A549 (cell line): ENCODE measurements at regions of chr2 and their contacts with region 1.

Region 1: GRCh38 chr2:160970052-160970965 is 189.9 kb upstream of the TANK start:
- DNase-seq: peak; percentile 55 to 85
- ATAC-seq: peak; percentile 93 to 94
- H3K4me3 ChIP-seq: peak overlapping the region; percentile 29; the same call in 2 of the 3 replicates
- H3K27ac ChIP-seq: peak overlapping the region; percentile 91
- H3K4me1 ChIP-seq: peaks cover 9% of the 10 kb centered on the region; the same call in 1 of the 3 replicates
- CTCF ChIP-seq: peak; percentile 91
- EP300 ChIP-seq: no peak
- POLR2A ChIP-seq: no peak
- RAD21 ChIP-seq: peak; percentile 94 to 98

Region 2: DNA sequence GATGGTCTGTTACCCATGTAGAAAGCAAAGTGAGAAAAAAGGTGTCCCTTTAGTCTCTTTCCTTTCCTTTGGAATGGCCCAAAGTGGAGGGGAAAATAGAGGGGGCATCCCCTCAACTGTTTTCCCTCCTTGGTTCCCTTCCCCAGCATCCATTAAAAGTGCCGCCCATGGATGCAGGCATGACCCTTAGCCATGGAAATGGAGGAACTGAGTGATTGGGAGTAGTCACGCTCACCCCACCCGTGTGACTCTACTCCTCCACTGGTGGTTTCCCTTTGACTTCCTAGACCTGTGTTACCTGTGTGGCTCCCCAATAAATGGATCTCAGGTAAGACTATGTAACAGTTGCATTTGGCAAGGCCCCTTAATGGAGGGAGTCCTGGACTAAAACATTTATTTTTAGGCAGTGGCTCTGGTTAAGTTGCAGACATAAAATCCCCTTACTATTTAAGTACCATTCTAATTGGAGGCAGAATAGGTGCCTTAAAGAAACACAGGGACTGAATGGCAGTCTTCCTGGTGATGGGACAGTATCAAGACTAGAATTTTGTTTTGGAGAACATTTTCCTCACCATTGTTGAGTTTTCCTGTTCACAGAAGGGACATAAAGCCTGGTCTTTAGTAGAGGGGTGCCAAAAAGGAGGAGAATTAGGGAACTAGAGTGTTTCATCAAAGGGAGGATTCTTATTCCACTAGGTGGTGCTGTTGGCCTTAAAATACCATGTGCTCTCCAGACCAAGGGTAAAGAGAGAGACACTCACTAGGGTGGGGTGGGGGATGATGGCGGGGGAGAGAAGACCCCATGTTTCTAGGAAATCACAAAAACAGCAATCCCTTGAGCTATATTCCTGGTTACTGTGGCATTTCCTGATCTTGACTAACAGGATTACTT is 882.2 kb before region 1 on chr2:
- CTCF ChIA-PET with region 1: interaction called, 12 read pairs
- POLR2A ChIA-PET with region 1: no interaction called
- DNase-seq: peak; percentile 35 to 62
- ATAC-seq: peak; percentile 92 to 93
- H3K4me3 ChIP-seq: no peak overlapping the region
- H3K27ac ChIP-seq: peak overlapping the region; percentile 0 to 67; a peak in 3 of 6 replicates
- H3K4me1 ChIP-seq: peaks cover 10% of the 10 kb centered on the region
- CTCF ChIP-seq: peak; percentile 86
- EP300 ChIP-seq: no peak
- POLR2A ChIP-seq: no peak
- RAD21 ChIP-seq: peak; percentile 90 to 92

Region 3: GRCh38 chr2:160324161-160324800 is 646.0 kb before region 1 on chr2:
- CTCF ChIA-PET with region 1: interaction called, 33 read pairs
- POLR2A ChIA-PET with region 1: interaction called, 5 read pairs
- DNase-seq: peak; percentile 15 to 64
- ATAC-seq: peak in 1 of 2 experiments; percentile 71; a peak in 3 of 6 replicates
- H3K4me3 ChIP-seq: no peak overlapping the region
- H3K27ac ChIP-seq: peak overlapping the region in 1 of 2 experiments; percentile 29; a peak in 1 of 6 replicates
- H3K4me1 ChIP-seq: peaks cover 92% of the 10 kb centered on the region
- CTCF ChIP-seq: peak; percentile 79
- EP300 ChIP-seq: no peak
- POLR2A ChIP-seq: no peak
- RAD21 ChIP-seq: peak; percentile 71 to 76

Region 4: DNA sequence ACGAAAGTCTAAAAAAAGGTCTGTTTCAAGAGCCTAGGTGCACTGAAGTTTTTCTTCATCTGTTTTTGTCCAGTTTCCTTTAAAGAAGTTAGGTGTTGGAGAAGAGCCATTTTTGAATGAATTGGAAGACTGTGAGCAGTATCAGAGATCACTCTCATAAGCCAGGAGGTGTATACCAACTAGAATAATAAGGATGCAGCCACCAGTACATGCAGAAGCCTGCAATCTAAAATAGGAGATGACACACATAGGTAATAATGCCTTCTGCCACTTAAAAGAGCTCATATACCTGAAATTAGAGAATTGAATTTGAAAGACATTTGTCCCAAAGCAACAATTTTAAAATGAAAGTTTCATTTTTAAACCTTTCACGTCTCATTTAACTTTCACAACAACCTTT is 558.4 kb before region 1 on chr2:
- CTCF ChIA-PET with region 1: interaction called, 11 read pairs
- POLR2A ChIA-PET with region 1: interaction called, 4 read pairs
- DNase-seq: no peak
- ATAC-seq: no peak
- H3K4me3 ChIP-seq: no peak overlapping the region
- H3K27ac ChIP-seq: peak overlapping the region in 1 of 2 experiments; percentile 66; a peak in 3 of 6 replicates
- H3K4me1 ChIP-seq: peaks cover 43% of the 10 kb centered on the region
- CTCF ChIP-seq: no peak
- EP300 ChIP-seq: no peak
- POLR2A ChIP-seq: no peak
- RAD21 ChIP-seq: no peak

Region 5: GRCh38 chr2:160429248-160430000 is 540.9 kb before region 1 on chr2:
- CTCF ChIA-PET with region 1: interaction called, 15 read pairs
- POLR2A ChIA-PET with region 1: no interaction called
- DNase-seq: peak in 1 of 2 experiments; percentile 69
- ATAC-seq: peak; percentile 62 to 67; a peak in 3 of 6 replicates
- H3K4me3 ChIP-seq: no peak overlapping the region
- H3K27ac ChIP-seq: 0 out of 6 replicates have a peak overlapping the region, but pooled peaks of 1 of the 2 experiments have one; percentile 19
- H3K4me1 ChIP-seq: peaks cover 41% of the 10 kb centered on the region
- CTCF ChIP-seq: peak; percentile 48
- EP300 ChIP-seq: no peak
- POLR2A ChIP-seq: no peak
- RAD21 ChIP-seq: peak; percentile 45 to 49; a peak in 4 of 5 replicates

Region 6: GRCh38 chr2:160924936-160925353 is 45.4 kb before region 1 on chr2:
- CTCF ChIA-PET with region 1: interaction called, 11 read pairs
- POLR2A ChIA-PET with region 1: no interaction called
- DNase-seq: no peak
- ATAC-seq: no peak
- H3K4me3 ChIP-seq: no peak overlapping the region
- H3K27ac ChIP-seq: no peak overlapping the region
- H3K4me1 ChIP-seq: peaks cover 4% of the 10 kb centered on the region; the same call in 1 of the 3 replicates
- CTCF ChIP-seq: no peak
- EP300 ChIP-seq: no peak
- POLR2A ChIP-seq: no peak
- RAD21 ChIP-seq: no peak

Region 7: DNA sequence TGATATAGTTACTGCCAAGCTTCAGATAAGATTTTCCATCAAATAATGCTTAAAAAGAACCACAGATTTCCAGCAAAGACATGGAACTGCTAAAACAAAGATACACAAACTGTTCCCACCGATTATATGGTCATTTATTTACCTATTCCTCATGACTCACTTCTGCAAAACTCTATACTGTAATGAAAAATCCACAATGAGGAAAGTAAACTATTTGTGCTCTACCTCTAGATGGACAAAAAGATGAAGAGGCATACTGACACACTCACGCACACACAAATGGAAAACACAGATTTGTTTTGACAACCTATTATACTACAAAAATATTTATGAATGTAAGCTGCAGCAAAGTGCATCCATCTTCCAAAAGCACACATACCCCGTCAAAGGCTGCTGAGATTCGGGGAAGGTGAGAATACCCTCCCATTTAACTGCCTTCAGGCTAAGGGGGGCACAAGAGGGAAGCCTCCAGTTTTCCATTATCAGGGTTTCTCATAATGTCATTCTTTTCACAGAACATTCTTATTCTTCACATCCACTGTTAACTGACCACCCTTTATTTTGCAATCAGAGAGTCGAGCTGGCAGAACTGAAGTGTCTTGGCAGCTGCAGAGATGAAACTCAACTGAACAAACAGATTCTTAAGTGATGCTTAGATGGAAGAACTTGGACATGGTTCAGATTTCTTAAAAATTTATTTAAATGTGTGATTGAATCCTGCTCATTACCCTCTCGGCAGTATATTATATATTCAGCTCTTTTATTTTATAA is 74.0 kb after region 1 on chr2:
- CTCF ChIA-PET with region 1: no interaction called
- POLR2A ChIA-PET with region 1: no interaction called
- DNase-seq: no peak
- ATAC-seq: no peak
- H3K4me3 ChIP-seq: no peak overlapping the region
- H3K27ac ChIP-seq: no peak overlapping the region
- H3K4me1 ChIP-seq: peaks cover 9% of the 10 kb centered on the region; the same call in 1 of the 3 replicates
- CTCF ChIP-seq: no peak
- EP300 ChIP-seq: no peak
- POLR2A ChIP-seq: no peak
- RAD21 ChIP-seq: no peak

Region 8: GRCh38 chr2:161147856-161148569 is 177.7 kb after region 1 on chr2:
- CTCF ChIA-PET with region 1: no interaction called
- POLR2A ChIA-PET with region 1: no interaction called
- DNase-seq: no peak
- ATAC-seq: no peak
- H3K4me3 ChIP-seq: no peak overlapping the region
- H3K27ac ChIP-seq: no peak overlapping the region
- H3K4me1 ChIP-seq: no peaks in the 10 kb centered on the region
- CTCF ChIP-seq: no peak
- EP300 ChIP-seq: no peak
- POLR2A ChIP-seq: no peak
- RAD21 ChIP-seq: no peak